AG04450 (cell line): ENCODE measurements at regions of chr5 and their contacts with region 1.

Region 1: DNA sequence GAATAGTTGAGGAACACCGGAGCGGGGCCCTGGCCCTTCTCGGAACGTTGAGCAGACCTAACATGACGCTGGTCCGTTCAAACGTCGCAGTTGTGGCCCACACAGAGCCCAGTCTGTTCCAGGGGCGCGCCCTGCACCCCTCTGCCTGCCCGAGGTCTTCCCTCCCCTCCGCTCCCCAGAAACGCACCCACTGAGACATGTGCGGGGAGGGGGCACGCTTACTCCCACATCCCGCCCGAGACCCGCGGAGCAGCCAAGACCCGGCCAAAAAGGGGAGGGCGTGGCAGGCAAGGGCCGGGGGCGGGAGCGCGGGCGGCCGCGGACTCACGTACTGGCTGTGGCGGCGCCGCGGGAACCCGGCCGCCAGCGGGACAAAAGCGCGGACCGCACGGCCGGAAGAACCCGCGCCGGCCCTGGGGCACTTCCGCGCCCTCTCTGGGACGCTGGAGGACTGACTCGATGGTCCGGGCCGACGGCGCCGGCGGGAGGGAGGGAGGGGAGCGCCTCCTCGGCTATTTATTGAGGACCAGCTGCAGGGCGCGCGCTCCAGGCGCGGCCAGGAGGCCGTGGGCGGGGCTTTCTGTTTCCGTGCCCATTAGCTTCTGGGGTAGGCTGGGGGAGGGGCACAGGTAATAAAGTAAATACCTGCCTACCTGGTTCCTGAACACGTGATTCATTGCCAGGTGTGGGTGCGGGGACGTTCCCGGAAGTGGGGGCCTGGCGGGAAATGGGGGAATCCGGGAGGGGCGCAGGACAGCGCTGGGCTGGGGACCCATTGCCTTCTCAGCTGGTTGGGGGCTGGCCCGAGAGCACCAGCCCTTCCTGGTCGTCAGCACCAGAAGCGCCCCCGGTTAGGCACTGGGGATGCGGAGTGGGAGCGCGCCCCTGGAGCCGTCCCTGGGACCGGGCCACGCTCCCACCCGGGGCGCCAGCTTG is at the start of gene ZFP62:
- DNase-seq: peak; percentile 71
- H3K4me3 ChIP-seq: peak within 1 kb of the TSS; percentile 98
- H3K27ac ChIP-seq: peak within 1 kb of the TSS; percentile 65
- H3K27me3 ChIP-seq: no peaks in the 10 kb centered on the region
- CTCF ChIP-seq: no peak
- polyA plus RNA-seq, gene ZFP62: 13.7 and 18.0 TPM in 2 replicates

Region 2: GRCh38 chr5:180212363-180213255 is 648.5 kb before region 1 on chr5:
- CTCF ChIA-PET with region 1: no interaction called
- POLR2A ChIA-PET with region 1: no interaction called
- DNase-seq: no peak
- H3K4me3 ChIP-seq: no peak overlapping the region
- H3K27ac ChIP-seq: no peak overlapping the region
- H3K27me3 ChIP-seq: peaks cover 16% of the 10 kb centered on the region
- CTCF ChIP-seq: no peak

Region 3: GRCh38 chr5:180810210-180810958 is 50.8 kb before region 1 on chr5:
- CTCF ChIA-PET with region 1: no interaction called
- POLR2A ChIA-PET with region 1: interaction called, 11 read pairs
- DNase-seq: peak; percentile 81
- H3K4me3 ChIP-seq: peak overlapping the region; percentile 93
- H3K27ac ChIP-seq: peak overlapping the region; percentile 80
- H3K27me3 ChIP-seq: no peaks in the 10 kb centered on the region
- CTCF ChIP-seq: no peak